Dorsolateral prefrontal cortex (tissue), 120 donors: ENCODE measurements at regions of chr2 and their contacts with region 1.

Region 1: GRCh38 chr2:58046585-58047372 is at the start of gene VRK2:
- DNase-seq: peak in 9 of 10 donors; percentile 35 to 71 (median 46)
- H3K4me3 ChIP-seq: peak within 1 kb of the TSS; percentile 33 to 82 (median 72)
- H3K27ac ChIP-seq: peak within 1 kb of the TSS; percentile 50 to 96 (median 87)
- H3K27me3 ChIP-seq: peaks cover 0 to 12% (median 0%) of the 10 kb centered on the region in 45 donors
- CTCF ChIP-seq: peak in 25 of 56 donors; percentile 1 to 50 (median 22)
- total RNA-seq, gene VRK2: 4.8 to 70.5 (median 16.2) TPM

Region 2: GRCh38 chr2:58107803-58108710 is 61.3 kb after region 1 on chr2:
- intact Hi-C with region 1: loop called in 1 of 2 experiments (anchors 10 kb)
- DNase-seq: no peak
- H3K4me3 ChIP-seq: peak overlapping the region in 39 of 59 donors; percentile 1 to 51 (median 19)
- H3K27ac ChIP-seq: peak overlapping the region in 30 of 59 donors; percentile 4 to 70 (median 32)
- H3K27me3 ChIP-seq: no peaks in the 10 kb centered on the region
- CTCF ChIP-seq: no peak

Region 3: GRCh38 chr2:58146707-58147106 is 99.9 kb after region 1 on chr2:
- intact Hi-C with region 1: no loop called
- DNase-seq: no peak
- H3K4me3 ChIP-seq: no peak overlapping the region
- H3K27ac ChIP-seq: peak overlapping the region in 1 of 59 donors; percentile 10
- H3K27me3 ChIP-seq: no peaks in the 10 kb centered on the region
- CTCF ChIP-seq: no peak